Heart left ventricle (tissue), 16 donors: ENCODE measurements at regions of chr7 and their contacts with region 1.

Region 1: GRCh38 chr7:113159746-113160339 is 41.5 kb upstream of the SMIM30 start:
- DNase-seq: no peak
- ATAC-seq: peak in 1 of 4 donors; percentile 54
- H3K4me3 ChIP-seq: no peak overlapping the region
- H3K27ac ChIP-seq: no peak overlapping the region
- H3K4me1 ChIP-seq: no peaks in the 10 kb centered on the region
- H3K27me3 ChIP-seq: peaks cover 0 to 9% (median 0%) of the 10 kb centered on the region in 9 donors
- CTCF ChIP-seq: peak; percentile 24 to 59 (median 49)
- POLR2A ChIP-seq: no peak

Region 2: DNA sequence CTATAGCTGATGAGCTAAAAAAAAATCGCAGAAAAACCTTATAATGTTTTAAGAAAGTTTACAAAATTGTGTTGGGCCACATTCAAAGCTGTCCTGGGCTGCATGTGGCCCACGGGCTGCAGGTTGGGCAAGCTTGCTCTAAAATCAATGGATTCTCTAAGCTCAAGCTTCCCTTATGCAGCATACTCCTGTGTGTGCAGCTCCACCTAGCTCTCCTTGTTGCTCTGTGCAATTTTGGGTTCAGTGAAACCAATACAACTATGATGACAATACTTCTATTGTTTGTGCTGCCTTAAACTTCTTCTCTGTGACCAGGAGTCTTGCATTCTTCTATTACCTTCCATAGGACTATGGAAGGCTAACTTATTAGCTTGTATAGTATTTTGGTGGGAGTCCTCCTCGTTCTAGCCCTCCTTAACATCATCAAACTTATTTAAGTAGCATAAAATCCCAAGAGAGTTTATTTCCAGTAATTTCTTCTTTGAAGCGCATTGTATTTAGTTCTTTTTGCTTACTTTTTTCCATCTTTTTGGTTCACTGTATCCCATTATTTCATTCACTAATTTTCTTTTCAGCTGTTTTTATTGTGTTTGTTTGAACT is 129.4 kb after region 1 on chr7:
- intact Hi-C with region 1: loop called in 1 of 10 experiments (anchors 10 kb)
- DNase-seq: peak in 2 of 5 donors; percentile 22 to 28
- ATAC-seq: peak in 3 of 4 donors; percentile 65 to 79 (median 77)
- H3K4me3 ChIP-seq: no peak overlapping the region
- H3K27ac ChIP-seq: no peak overlapping the region
- H3K4me1 ChIP-seq: no peaks in the 10 kb centered on the region
- H3K27me3 ChIP-seq: no peaks in the 10 kb centered on the region
- CTCF ChIP-seq: peak in 11 of 12 donors; percentile 9 to 56 (median 34)
- POLR2A ChIP-seq: no peak

Region 3: GRCh38 chr7:113414401-113415035 is 254.7 kb after region 1 on chr7:
- intact Hi-C with region 1: loop called in 3 of 10 experiments (anchors 10 kb)
- DNase-seq: no peak
- ATAC-seq: no peak
- H3K4me3 ChIP-seq: no peak overlapping the region
- H3K27ac ChIP-seq: no peak overlapping the region
- H3K4me1 ChIP-seq: no peaks in the 10 kb centered on the region
- H3K27me3 ChIP-seq: no peaks in the 10 kb centered on the region
- CTCF ChIP-seq: no peak
- POLR2A ChIP-seq: no peak

Region 4: DNA sequence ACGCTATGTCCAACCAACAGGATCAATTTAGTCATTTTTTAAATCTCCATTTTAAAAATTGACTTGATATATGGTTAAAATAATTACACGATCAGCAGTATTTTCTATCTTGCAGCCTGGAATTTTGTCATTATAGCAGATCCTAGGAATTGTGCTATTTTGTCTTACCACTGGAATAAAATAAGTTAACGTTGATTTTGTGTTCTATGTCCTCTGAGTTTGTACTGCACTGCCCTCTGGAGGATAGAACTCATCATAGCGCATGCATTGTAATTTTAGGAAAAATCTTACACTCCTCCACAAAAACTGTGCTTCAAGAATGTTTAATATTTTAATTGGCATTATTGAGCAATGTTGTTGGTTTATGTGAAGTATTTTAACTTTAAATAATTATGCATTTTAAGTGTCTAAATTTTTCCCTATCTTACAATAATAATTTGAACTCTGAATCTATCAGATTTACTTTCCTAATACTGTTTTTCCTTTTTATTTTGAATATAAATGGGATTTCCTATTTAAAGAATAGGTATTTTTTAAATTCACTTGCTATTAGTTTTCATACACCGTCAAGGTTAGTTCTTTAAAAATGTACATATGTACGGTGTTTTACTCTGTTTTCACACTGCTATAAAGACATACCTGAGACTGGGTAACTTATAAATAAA is 538.8 kb after region 1 on chr7:
- intact Hi-C with region 1: loop called in 2 of 10 experiments (anchors 10 kb)
- DNase-seq: no peak
- ATAC-seq: no peak
- H3K4me3 ChIP-seq: no peak overlapping the region
- H3K27ac ChIP-seq: no peak overlapping the region
- H3K4me1 ChIP-seq: no peaks in the 10 kb centered on the region
- H3K27me3 ChIP-seq: no peaks in the 10 kb centered on the region
- CTCF ChIP-seq: peak; percentile 45 to 71 (median 62)
- POLR2A ChIP-seq: no peak

Region 5: DNA sequence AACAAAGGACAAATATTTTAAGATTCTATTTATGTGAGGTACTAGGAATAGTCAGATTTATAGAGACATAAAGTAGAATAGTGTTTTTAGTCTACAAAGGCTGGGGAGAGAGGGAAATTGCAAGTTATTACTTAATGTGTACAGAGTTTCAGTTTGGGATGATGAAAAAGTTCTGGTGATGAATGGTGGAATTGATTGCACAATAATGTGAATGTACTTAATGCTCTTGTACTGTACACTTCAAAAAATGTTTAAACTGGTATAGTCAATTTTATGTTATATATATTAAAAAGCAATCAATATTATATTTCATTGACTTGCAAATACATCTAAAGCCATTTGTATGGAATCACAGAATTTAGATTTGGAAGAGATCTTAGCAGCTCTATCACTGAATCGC is 545.6 kb after region 1 on chr7:
- intact Hi-C with region 1: loop called in 1 of 10 experiments (anchors 10 kb)
- DNase-seq: no peak
- ATAC-seq: no peak
- H3K4me3 ChIP-seq: no peak overlapping the region
- H3K27ac ChIP-seq: no peak overlapping the region
- H3K4me1 ChIP-seq: no peaks in the 10 kb centered on the region
- H3K27me3 ChIP-seq: no peaks in the 10 kb centered on the region
- CTCF ChIP-seq: no peak
- POLR2A ChIP-seq: no peak